ENCODE measurements at regions of chr3 and their contacts with region 1.

Region 1: GRCh38 chr3:152444029-152444641 is 175.4 kb downstream of the MBNL1 start:
- DNase-seq: no peak
- H3K4me3 ChIP-seq: no peak overlapping the region
- H3K27ac ChIP-seq: no peak overlapping the region
- H3K4me1 ChIP-seq: no peaks in the 10 kb centered on the region
- H3K27me3 ChIP-seq: no peaks in the 10 kb centered on the region
- CTCF ChIP-seq: peak in 2 of 3 experiments; percentile 41 to 50; a peak in 2 of 4 replicates
- EP300 ChIP-seq: no peak
- POLR2A ChIP-seq: no peak
- RAD21 ChIP-seq: peak; percentile 76 to 77

Region 2: DNA sequence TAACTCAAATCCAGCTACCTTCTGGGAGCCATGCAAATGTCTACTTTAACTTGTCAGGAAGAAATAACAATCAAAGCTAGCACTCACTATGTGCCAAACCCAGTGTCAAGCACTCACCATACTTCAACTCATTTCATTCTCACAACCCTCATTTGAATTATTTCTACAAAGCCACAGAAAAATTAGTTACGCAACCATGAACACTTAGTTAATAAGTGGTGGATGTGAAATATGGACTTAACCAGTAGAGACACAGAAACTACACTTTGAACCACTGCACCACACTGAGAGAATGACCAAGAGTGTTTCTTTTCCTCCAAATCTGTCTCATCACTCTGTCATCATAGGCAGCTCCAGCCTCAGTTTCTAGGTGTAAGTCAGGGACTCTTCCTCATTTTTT is 266.4 kb before region 1 on chr3:
- CTCF ChIA-PET with region 1: interaction called, 71 read pairs
- POLR2A ChIA-PET with region 1: no interaction called
- DNase-seq: no peak
- H3K4me3 ChIP-seq: no peak overlapping the region
- H3K27ac ChIP-seq: no peak overlapping the region
- H3K4me1 ChIP-seq: no peaks in the 10 kb centered on the region
- H3K27me3 ChIP-seq: peaks cover 0 to 1% (median 0%) of the 10 kb centered on the region in 4 experiments; a peak in 1 of 7 replicates
- CTCF ChIP-seq: no peak
- EP300 ChIP-seq: no peak
- POLR2A ChIP-seq: no peak
- RAD21 ChIP-seq: no peak

Region 3: GRCh38 chr3:152183473-152183872 is 260.7 kb before region 1 on chr3:
- CTCF ChIA-PET with region 1: interaction called, 71 read pairs
- POLR2A ChIA-PET with region 1: no interaction called
- DNase-seq: peak in 1 of 2 experiments; percentile 53
- H3K4me3 ChIP-seq: no peak overlapping the region
- H3K27ac ChIP-seq: no peak overlapping the region
- H3K4me1 ChIP-seq: no peaks in the 10 kb centered on the region
- H3K27me3 ChIP-seq: peaks cover 0 to 1% (median 0%) of the 10 kb centered on the region in 4 experiments; a peak in 1 of 7 replicates
- CTCF ChIP-seq: peak; percentile 57 to 77 (median 67)
- EP300 ChIP-seq: no peak
- POLR2A ChIP-seq: no peak
- RAD21 ChIP-seq: peak; percentile 77 to 81